Activated CD8-positive, alpha-beta T cell treated with anti-CD3 and anti-CD28 coated beads for 36 hours (primary cell): ENCODE measurements at regions of chr9 and their contacts with region 1.

Region 1: GRCh38 chr9:131167146-131167692 is 41.8 kb downstream of the NUP214 start:
- DNase-seq: no peak
- ATAC-seq: no peak
- H3K4me3 Mint-ChIP-seq: no peak overlapping the region
- H3K27ac Mint-ChIP-seq: no peak overlapping the region
- H3K4me1 Mint-ChIP-seq: peaks cover 4% of the 10 kb centered on the region
- H3K27me3 Mint-ChIP-seq: no peaks in the 10 kb centered on the region
- CTCF ChIP-seq: no peak

Region 2: DNA sequence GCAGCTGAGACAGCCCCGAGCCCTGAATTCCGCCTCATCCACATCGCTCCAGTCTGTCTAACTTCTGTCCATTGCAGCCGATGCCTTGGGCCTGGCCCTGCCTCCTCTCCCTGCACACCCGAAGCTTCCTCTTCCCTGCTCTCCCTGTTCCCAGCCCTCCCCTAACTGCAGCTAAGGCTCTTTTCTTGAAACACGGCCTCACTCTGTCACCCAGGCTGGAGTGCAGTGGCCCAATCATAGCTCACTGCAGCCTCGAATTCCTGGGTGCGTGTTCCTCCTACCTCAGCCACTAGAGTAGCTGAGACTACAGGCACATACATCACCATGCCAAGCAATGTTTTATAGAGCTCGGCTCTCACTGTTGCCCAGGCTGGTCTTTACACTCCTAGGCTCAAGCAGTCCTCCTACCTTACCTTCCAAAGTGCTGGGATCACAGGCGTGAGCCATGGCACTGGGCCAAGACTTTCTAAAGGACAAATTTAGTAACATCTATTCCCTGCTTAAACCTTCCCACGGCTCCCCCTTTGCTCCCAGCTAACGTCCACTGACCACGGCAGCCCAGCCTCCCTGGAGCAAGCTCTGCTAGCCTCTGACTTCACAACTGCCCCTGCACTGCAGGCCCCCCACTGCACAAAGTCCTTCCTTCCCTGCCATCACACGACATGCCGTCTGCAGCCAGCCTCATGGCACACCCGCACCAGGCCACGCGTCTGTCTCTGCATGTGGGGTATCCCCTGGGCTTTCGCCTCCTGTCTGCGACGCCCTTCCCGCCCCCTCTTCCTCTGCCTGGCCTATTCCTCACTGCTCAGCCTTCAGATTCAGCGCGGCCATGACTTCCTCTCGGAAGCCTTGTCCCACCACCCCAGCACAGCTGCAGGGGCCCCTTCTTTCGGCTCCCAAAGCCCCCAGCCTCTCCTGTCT is 129.6 kb before region 1 on chr9:
- CTCF ChIA-PET with region 1: no interaction called
- POLR2A ChIA-PET with region 1: no interaction called
- intact Hi-C with region 1: no loop called
- DNase-seq: no peak
- ATAC-seq: no peak
- H3K4me3 Mint-ChIP-seq: no peak overlapping the region
- H3K27ac Mint-ChIP-seq: no peak overlapping the region
- H3K4me1 Mint-ChIP-seq: no peaks in the 10 kb centered on the region
- H3K27me3 Mint-ChIP-seq: peaks cover 2% of the 10 kb centered on the region
- CTCF ChIP-seq: no peak

Region 3: DNA sequence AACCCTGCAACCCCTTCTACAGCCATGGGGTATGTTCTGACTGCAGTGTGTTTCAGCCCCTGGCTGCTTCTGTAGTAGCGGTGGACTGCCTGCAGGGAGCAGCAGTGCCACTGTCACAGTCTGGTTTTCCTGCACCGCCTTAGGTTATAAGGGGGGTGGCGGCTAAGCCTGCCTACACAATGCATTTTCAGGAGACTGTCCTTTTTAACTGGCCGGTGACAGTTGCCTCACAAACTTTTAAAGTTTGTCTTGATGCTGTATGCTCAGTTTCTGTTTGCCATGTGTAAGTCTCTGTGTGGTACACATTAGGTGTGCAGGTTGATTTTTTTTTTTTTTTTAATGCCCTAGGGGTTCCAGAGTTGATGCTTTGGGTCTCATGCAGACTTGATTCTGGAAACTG is 11.2 kb after region 1 on chr9:
- CTCF ChIA-PET with region 1: interaction called, 45 read pairs
- POLR2A ChIA-PET with region 1: no interaction called
- intact Hi-C with region 1: no loop called
- DNase-seq: peak; percentile 82
- ATAC-seq: peak; percentile 100
- H3K4me3 Mint-ChIP-seq: no peak overlapping the region
- H3K27ac Mint-ChIP-seq: no peak overlapping the region
- H3K4me1 Mint-ChIP-seq: peaks cover 4% of the 10 kb centered on the region
- H3K27me3 Mint-ChIP-seq: no peaks in the 10 kb centered on the region
- CTCF ChIP-seq: peak; percentile 97